ENCODE measurements at regions of chr19 and their contacts with region 1.

Region 1: GRCh38 chr19:32339988-32340874 is 5.2 kb upstream of the ZNF507 start:
- DNase-seq: peak; percentile 77 to 87
- ATAC-seq: peak; percentile 89 to 93
- H3K4me3 ChIP-seq: no peak overlapping the region
- H3K27ac ChIP-seq: peak overlapping the region in 1 of 2 experiments; percentile 33; a peak in 1 of 6 replicates
- H3K4me1 ChIP-seq: peaks cover 9% of the 10 kb centered on the region; the same call in 1 of the 3 replicates
- CTCF ChIP-seq: peak; percentile 90
- EP300 ChIP-seq: no peak
- POLR2A ChIP-seq: no peak
- RAD21 ChIP-seq: peak; percentile 79 to 82

Region 2: GRCh38 chr19:32233885-32234284 is 106.3 kb before region 1 on chr19:
- CTCF ChIA-PET with region 1: no interaction called
- POLR2A ChIA-PET with region 1: no interaction called
- DNase-seq: no peak
- ATAC-seq: no peak
- H3K4me3 ChIP-seq: no peak overlapping the region
- H3K27ac ChIP-seq: no peak overlapping the region
- H3K4me1 ChIP-seq: no peaks in the 10 kb centered on the region
- CTCF ChIP-seq: no peak
- EP300 ChIP-seq: no peak
- POLR2A ChIP-seq: no peak
- RAD21 ChIP-seq: no peak

Region 3: GRCh38 chr19:32309711-32310390 is 30.4 kb before region 1 on chr19:
- CTCF ChIA-PET with region 1: interaction called, 26 read pairs
- POLR2A ChIA-PET with region 1: no interaction called
- DNase-seq: no peak
- ATAC-seq: no peak
- H3K4me3 ChIP-seq: no peak overlapping the region
- H3K27ac ChIP-seq: no peak overlapping the region
- H3K4me1 ChIP-seq: no peaks in the 10 kb centered on the region
- CTCF ChIP-seq: no peak
- EP300 ChIP-seq: no peak
- POLR2A ChIP-seq: no peak
- RAD21 ChIP-seq: no peak

Region 4: GRCh38 chr19:32352241-32352630 is 12.0 kb after region 1 on chr19:
- CTCF ChIA-PET with region 1: interaction called, 74 read pairs
- POLR2A ChIA-PET with region 1: interaction called, 13 read pairs
- DNase-seq: no peak
- ATAC-seq: no peak
- H3K4me3 ChIP-seq: no peak overlapping the region
- H3K27ac ChIP-seq: no peak overlapping the region
- H3K4me1 ChIP-seq: peaks cover 44% of the 10 kb centered on the region
- CTCF ChIP-seq: no peak
- EP300 ChIP-seq: no peak
- POLR2A ChIP-seq: no peak
- RAD21 ChIP-seq: no peak

Region 5: DNA sequence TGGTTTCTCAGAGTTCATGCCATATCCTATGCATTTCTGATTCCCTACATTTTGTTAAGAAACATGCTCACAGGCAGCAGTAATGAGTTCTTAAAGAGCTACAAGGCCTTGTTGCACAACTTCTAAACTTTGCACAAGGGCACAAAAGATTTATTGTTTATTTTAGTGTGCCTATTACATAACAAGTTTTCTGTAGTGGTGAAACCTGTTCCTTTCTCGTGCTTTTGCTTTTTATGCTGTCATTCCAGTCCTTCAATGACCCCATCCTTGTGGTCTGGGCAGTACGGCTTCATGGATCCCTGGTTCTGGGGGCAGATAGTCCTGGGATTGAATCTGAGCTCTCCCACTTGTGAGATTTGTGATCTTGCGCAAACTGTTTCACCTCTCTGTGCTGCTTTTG is 23.0 kb after region 1 on chr19:
- CTCF ChIA-PET with region 1: interaction called, 74 read pairs
- POLR2A ChIA-PET with region 1: interaction called, 7 read pairs
- DNase-seq: peak in 1 of 2 experiments; percentile 65
- ATAC-seq: peak; percentile 12 to 42; a peak in 5 of 6 replicates
- H3K4me3 ChIP-seq: no peak overlapping the region
- H3K27ac ChIP-seq: peak overlapping the region; percentile 45 to 50; a peak in 5 of 6 replicates
- H3K4me1 ChIP-seq: peaks cover 33% of the 10 kb centered on the region
- CTCF ChIP-seq: no peak
- EP300 ChIP-seq: peak; percentile 5 to 21; a peak in 1 of 5 replicates
- POLR2A ChIP-seq: no peak
- RAD21 ChIP-seq: no peak

Region 6: GRCh38 chr19:32397526-32398135 is 57.4 kb after region 1 on chr19:
- CTCF ChIA-PET with region 1: interaction called, 21 read pairs
- POLR2A ChIA-PET with region 1: no interaction called
- DNase-seq: peak in 1 of 2 experiments; percentile 45
- ATAC-seq: peak; percentile 60 to 70; a peak in 4 of 6 replicates
- H3K4me3 ChIP-seq: no peak overlapping the region
- H3K27ac ChIP-seq: no peak overlapping the region
- H3K4me1 ChIP-seq: peaks cover 9% of the 10 kb centered on the region
- CTCF ChIP-seq: no peak
- EP300 ChIP-seq: no peak
- POLR2A ChIP-seq: no peak
- RAD21 ChIP-seq: no peak

Region 7: GRCh38 chr19:32532233-32532632 is 192.0 kb after region 1 on chr19:
- CTCF ChIA-PET with region 1: no interaction called
- POLR2A ChIA-PET with region 1: no interaction called
- DNase-seq: no peak
- ATAC-seq: no peak
- H3K4me3 ChIP-seq: no peak overlapping the region
- H3K27ac ChIP-seq: no peak overlapping the region
- H3K4me1 ChIP-seq: no peaks in the 10 kb centered on the region
- CTCF ChIP-seq: no peak
- EP300 ChIP-seq: no peak
- POLR2A ChIP-seq: no peak
- RAD21 ChIP-seq: no peak

Region 8: DNA sequence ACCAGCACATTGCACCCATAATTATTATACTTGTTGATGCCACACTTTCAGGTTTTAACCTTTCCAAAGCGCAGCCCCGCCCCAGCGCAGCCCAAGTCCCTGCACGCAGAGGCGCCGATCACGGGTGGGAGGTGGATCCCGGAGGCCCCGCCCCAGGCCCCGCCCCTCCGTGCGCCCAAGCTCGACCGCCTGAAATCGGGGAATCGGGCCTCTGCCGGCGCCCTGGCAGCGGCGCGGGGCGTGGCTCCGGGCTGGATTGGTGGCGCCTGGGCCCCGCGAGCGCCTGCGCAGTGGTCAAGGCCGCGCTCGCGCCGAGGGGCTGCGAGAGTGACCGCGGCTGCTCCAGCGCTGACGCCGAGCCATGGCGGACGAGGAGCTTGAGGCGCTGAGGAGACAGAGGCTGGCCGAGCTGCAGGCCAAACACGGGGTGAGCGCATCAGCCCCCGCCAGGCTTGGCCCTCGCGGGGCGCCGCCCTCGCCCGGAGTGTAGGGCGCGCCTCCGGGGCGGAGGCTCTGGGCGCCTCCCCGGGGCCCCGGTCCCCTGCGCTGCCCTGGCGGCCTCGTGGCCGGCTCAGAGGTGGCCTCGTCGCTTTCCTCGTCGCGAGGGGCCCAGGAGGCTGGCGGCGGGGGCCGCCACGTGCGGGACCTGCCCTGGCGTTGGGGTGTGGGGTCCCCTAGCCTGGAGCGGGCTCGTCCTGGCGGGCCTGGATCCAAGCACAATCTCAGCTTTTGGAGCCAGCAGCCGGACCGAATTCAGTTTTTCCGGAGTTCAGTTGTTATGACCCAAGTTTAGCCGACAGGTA is 240.9 kb after region 1 on chr19 and contains the start of gene PDCD5:
- CTCF ChIA-PET with region 1: interaction called, 182 read pairs
- POLR2A ChIA-PET with region 1: interaction called, 15 read pairs
- DNase-seq: peak; percentile 98
- ATAC-seq: peak; percentile 86 to 94
- H3K4me3 ChIP-seq: peak within 1 kb of the TSS; percentile 94
- H3K27ac ChIP-seq: peak within 1 kb of the TSS; percentile 91 to 93
- H3K4me1 ChIP-seq: peaks cover 16% of the 10 kb centered on the region
- CTCF ChIP-seq: no peak
- EP300 ChIP-seq: no peak
- POLR2A ChIP-seq: peak; percentile 98
- RAD21 ChIP-seq: no peak
- polyA plus RNA-seq, gene PDCD5: 196 and 445 TPM in 2 replicates

Measured in A549 (cell line).